ENCODE measurements at regions of chr10 and their contacts with region 1.

Region 1: DNA sequence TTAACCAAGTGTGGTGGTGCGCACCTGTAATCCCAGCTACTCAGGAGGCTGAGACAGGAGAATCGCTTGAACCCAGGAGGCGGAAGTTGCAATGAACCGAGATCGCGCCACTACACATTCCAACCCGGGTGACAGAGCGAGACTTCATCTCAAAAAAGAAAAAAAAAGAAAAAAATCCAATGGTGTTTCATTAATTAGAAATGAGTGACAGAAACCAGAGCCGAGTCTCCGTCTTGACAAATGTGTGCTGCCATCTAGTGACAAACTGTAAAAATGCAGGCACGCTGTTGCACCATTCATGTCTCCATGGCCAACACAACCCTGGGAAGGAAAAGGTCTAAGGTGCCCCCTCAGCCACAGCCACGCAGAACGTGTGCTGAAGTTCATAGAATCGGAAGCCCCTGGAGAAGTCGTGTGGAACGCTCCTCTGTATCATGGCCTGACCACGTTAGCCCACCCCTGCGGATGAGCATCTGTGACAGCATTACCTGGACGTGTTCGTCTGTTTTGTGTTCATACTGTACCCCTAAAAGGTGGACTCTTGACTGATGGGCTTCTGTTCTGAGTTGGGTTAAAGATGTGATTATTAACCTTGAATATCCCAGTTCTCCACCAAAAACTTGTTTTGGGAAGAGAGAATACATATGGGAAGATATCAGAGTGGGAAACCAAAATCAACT is 94.9 kb downstream of the LYZL2 start:
- DNase-seq: peak; percentile 78
- ATAC-seq: peak; percentile 45; the same call in 1 of the 2 replicates
- H3K4me3 ChIP-seq: no peak overlapping the region
- H3K27ac ChIP-seq: no peak overlapping the region
- H3K4me1 ChIP-seq: 0 out of 2 replicates have a peak, but pooled peaks cover 4% of the 10 kb centered on the region
- H3K27me3 ChIP-seq: no peaks in the 10 kb centered on the region
- CTCF ChIP-seq: peak; percentile 70

Region 2: DNA sequence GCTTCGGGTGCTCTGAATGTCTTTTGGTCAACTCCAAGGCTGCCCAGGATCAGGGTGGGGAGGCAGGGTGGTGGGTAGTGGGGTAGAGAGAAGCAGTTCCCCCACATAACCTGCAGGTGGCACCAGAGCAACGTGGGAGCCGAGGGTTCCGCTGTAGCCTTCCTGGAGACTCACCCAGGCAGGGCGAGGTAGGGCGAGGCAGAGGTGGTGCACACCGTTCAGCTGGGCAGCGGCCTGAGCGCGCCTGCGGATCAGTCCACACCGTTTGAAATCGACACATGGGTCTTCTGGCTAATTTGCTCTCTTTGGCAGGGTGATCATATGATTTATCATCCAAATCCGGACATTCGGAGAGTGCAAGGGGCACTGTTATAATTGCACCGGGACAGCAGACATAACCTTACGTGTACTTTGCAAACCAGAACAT is 142.0 kb before region 1 on chr10:
- CTCF ChIA-PET with region 1: no interaction called
- POLR2A ChIA-PET with region 1: no interaction called
- intact Hi-C with region 1: loop called (anchors 1 kb)
- DNase-seq: peak; percentile 75
- ATAC-seq: peak; percentile 92
- H3K4me3 ChIP-seq: peak overlapping the region; percentile 57
- H3K27ac ChIP-seq: no peak overlapping the region
- H3K4me1 ChIP-seq: peaks cover 8% of the 10 kb centered on the region
- H3K27me3 ChIP-seq: no peaks in the 10 kb centered on the region
- CTCF ChIP-seq: peak; percentile 78

Region 3: GRCh38 chr10:30413996-30414576 is 120.5 kb before region 1 on chr10:
- CTCF ChIA-PET with region 1: no interaction called
- POLR2A ChIA-PET with region 1: no interaction called
- intact Hi-C with region 1: loop called (anchors 1 kb)
- DNase-seq: peak; percentile 73
- ATAC-seq: peak; percentile 51
- H3K4me3 ChIP-seq: no peak overlapping the region
- H3K27ac ChIP-seq: no peak overlapping the region
- H3K4me1 ChIP-seq: no peaks in the 10 kb centered on the region
- H3K27me3 ChIP-seq: no peaks in the 10 kb centered on the region
- CTCF ChIP-seq: peak; percentile 74

Region 4: GRCh38 chr10:30467651-30468338 is 66.8 kb before region 1 on chr10:
- CTCF ChIA-PET with region 1: no interaction called
- POLR2A ChIA-PET with region 1: no interaction called
- intact Hi-C with region 1: no loop called
- DNase-seq: no peak
- ATAC-seq: no peak
- H3K4me3 ChIP-seq: no peak overlapping the region
- H3K27ac ChIP-seq: no peak overlapping the region
- H3K4me1 ChIP-seq: no peaks in the 10 kb centered on the region
- H3K27me3 ChIP-seq: no peaks in the 10 kb centered on the region
- CTCF ChIP-seq: no peak

Region 5: GRCh38 chr10:30519639-30520038 is 15.0 kb before region 1 on chr10:
- CTCF ChIA-PET with region 1: no interaction called
- POLR2A ChIA-PET with region 1: no interaction called
- intact Hi-C with region 1: no loop called
- DNase-seq: no peak
- ATAC-seq: no peak
- H3K4me3 ChIP-seq: no peak overlapping the region
- H3K27ac ChIP-seq: no peak overlapping the region
- H3K4me1 ChIP-seq: no peaks in the 10 kb centered on the region
- H3K27me3 ChIP-seq: no peaks in the 10 kb centered on the region
- CTCF ChIP-seq: no peak

Region 6: GRCh38 chr10:30562787-30563186 is 28.2 kb after region 1 on chr10:
- CTCF ChIA-PET with region 1: no interaction called
- POLR2A ChIA-PET with region 1: no interaction called
- intact Hi-C with region 1: no loop called
- DNase-seq: peak; percentile 11
- ATAC-seq: no peak
- H3K4me3 ChIP-seq: no peak overlapping the region
- H3K27ac ChIP-seq: no peak overlapping the region
- H3K4me1 ChIP-seq: no peaks in the 10 kb centered on the region
- H3K27me3 ChIP-seq: no peaks in the 10 kb centered on the region
- CTCF ChIP-seq: no peak

Region 7: GRCh38 chr10:30591249-30591670 is 56.7 kb after region 1 on chr10:
- CTCF ChIA-PET with region 1: no interaction called
- POLR2A ChIA-PET with region 1: no interaction called
- intact Hi-C with region 1: loop called (anchors 2 kb)
- DNase-seq: peak; percentile 61
- ATAC-seq: peak; percentile 63
- H3K4me3 ChIP-seq: no peak overlapping the region
- H3K27ac ChIP-seq: no peak overlapping the region
- H3K4me1 ChIP-seq: no peaks in the 10 kb centered on the region
- H3K27me3 ChIP-seq: no peaks in the 10 kb centered on the region
- CTCF ChIP-seq: peak; percentile 67

Region 8: DNA sequence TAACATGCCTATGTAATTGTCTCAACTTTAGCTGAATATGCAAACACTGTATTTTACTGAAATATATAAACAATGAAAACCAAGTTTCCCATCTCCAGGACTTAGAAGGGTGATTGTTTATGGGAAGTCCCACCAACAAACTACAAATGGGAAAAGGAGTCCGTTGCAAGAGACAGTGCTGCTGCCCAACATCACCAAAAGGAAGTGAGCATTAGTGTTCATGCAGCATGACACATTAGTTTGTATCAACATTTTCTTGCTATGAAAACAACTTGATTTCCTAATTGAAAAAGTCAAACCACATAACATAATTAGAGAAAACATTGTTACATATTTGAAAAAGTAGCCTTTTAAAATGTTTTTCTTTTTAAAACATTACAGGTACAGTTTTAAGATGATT is 358.6 kb after region 1 on chr10:
- CTCF ChIA-PET with region 1: no interaction called
- POLR2A ChIA-PET with region 1: no interaction called
- intact Hi-C with region 1: no loop called
- DNase-seq: no peak
- ATAC-seq: no peak
- H3K4me3 ChIP-seq: no peak overlapping the region
- H3K27ac ChIP-seq: no peak overlapping the region
- H3K4me1 ChIP-seq: no peaks in the 10 kb centered on the region
- H3K27me3 ChIP-seq: no peaks in the 10 kb centered on the region
- CTCF ChIP-seq: no peak